ENCODE measurements at regions of chr12 and their contacts with region 1.

Region 1: DNA sequence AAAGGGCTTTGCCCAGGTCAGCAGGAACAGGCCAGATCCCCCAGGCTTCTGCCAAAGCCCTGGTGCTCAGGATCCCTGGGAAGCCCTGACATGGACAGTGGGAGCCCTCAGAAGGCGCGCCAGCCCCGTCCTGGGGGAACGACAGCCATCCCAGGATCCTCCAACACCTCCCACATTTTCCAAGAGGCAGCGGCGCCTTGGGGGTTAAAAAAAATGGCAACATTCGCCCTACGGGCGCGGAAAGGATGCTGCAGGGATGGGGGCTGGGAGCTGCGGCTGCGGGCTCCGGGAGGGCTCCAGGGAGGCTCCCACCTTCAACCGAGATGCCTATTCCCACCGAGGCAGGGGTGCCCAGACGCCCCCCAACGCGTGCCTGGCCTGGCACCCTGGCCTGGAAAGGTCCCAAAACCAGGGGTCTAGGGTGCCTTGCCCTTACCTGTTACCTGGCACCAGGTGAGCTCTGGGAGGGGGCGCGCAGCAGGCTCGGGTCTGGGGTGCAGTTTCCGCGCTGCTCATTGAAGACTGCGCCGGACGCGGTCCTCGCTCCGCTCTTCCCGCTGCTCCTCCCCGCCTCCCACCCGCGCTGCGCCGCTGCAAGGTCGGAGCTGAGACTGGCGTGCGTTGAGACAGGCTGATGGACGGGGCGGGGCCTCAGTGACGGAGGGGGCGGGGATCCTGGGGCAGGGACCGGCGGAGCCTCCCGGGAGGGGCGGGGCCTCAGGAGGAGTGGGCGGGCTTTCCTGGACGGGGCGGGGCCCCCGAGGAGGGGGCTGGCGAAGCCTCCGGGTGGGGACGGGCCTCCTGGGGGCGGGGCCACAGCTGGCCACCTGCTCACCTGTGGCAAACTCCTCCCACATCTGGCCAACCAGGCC is at the start of gene ABCB9:
- H3K4me3 ChIP-seq: peak within 1 kb of the TSS; percentile 71
- H3K27ac ChIP-seq: peak within 1 kb of the TSS; percentile 48; the same call in 1 of the 2 replicates
- H3K4me1 ChIP-seq: peaks cover 12% of the 10 kb centered on the region
- CTCF ChIP-seq: no peak

Region 2: GRCh38 chr12:122980183-122981046 is 14.3 kb after region 1 on chr12 and contains the start of gene ARL6IP4:
- CTCF ChIA-PET with region 1: no interaction called
- POLR2A ChIA-PET with region 1: interaction called, 36 read pairs
- H3K4me3 ChIP-seq: peak within 1 kb of the TSS; percentile 53
- H3K27ac ChIP-seq: peak within 1 kb of the TSS; percentile 87
- H3K4me1 ChIP-seq: peaks cover 15% of the 10 kb centered on the region
- CTCF ChIP-seq: peak; percentile 40

Measured in HEK293 (cell line).